ENCODE measurements at regions of chr20 and their contacts with region 1.

Region 1: DNA sequence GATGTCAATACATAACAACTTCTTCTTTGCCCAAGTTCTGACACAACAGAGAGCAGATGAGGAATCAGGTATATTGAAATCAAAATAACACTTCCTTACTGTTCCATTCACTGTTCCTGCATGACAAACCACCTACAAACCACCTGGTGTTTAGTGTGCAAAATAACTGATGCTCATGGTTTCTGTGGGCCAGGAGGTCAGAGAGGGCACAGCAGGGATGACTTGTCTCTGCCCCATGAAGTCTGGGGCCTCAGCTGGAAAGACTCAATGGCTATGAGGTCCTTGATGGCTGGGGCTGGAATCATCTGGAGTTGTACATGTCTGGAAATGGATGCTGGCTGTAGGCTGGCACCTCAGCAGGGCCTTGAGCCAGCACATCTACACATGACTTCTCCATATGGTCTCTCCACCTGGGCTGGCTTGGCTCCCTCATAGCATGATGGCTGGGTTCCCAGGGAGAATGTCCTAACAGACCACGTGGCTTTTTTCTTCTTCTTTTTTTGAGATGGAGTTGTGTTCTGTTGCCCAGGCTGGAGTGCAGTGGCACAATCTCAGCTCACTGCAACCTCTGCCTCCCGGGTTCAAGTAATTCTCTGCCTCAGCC is 7.4 kb upstream of the COX4I2 start:
- DNase-seq: no peak
- ATAC-seq: no peak
- H3K4me3 ChIP-seq: no peak overlapping the region
- H3K27ac ChIP-seq: no peak overlapping the region
- H3K4me1 ChIP-seq: peaks cover 8 to 19% of the 10 kb centered on the region in 2 experiments; a peak in 4 of 5 replicates
- H3K27me3 ChIP-seq: no peaks in the 10 kb centered on the region; a peak in 1 of 5 replicates
- CTCF ChIP-seq: no peak
- EP300 ChIP-seq: no peak
- POLR2A ChIP-seq: no peak
- RAD21 ChIP-seq: no peak

Region 2: GRCh38 chr20:31514159-31515071 is 115.9 kb before region 1 on chr20 and contains the start of gene HM13:
- CTCF ChIA-PET with region 1: no interaction called
- POLR2A ChIA-PET with region 1: no interaction called
- in situ Hi-C with region 1: no loop called
- intact Hi-C with region 1: no loop called
- DNase-seq: peak; percentile 96 to 97 (median 96)
- ATAC-seq: peak; percentile 90
- H3K4me3 ChIP-seq: peak within 1 kb of the TSS; percentile 99
- H3K27ac ChIP-seq: peak within 1 kb of the TSS; percentile 96
- H3K4me1 ChIP-seq: peaks cover 17 to 18% of the 10 kb centered on the region in 2 experiments; a peak in 4 of 5 replicates
- H3K27me3 ChIP-seq: no peaks in the 10 kb centered on the region
- CTCF ChIP-seq: peak; percentile 90 to 96 (median 95)
- EP300 ChIP-seq: no peak
- POLR2A ChIP-seq: peak; percentile 90
- RAD21 ChIP-seq: no peak
- polyA plus RNA-seq, gene HM13: 7.7 to 17.9 TPM

Region 3: GRCh38 chr20:31595654-31596411 is 34.5 kb before region 1 on chr20:
- CTCF ChIA-PET with region 1: no interaction called
- POLR2A ChIA-PET with region 1: no interaction called
- in situ Hi-C with region 1: no loop called
- intact Hi-C with region 1: no loop called
- DNase-seq: peak in 2 of 4 experiments; percentile 26 to 41
- ATAC-seq: peak; percentile 65
- H3K4me3 ChIP-seq: no peak overlapping the region
- H3K27ac ChIP-seq: peak overlapping the region; percentile 47
- H3K4me1 ChIP-seq: peaks cover 24 to 32% of the 10 kb centered on the region in 2 experiments
- H3K27me3 ChIP-seq: no peaks in the 10 kb centered on the region
- CTCF ChIP-seq: no peak
- EP300 ChIP-seq: no peak
- POLR2A ChIP-seq: no peak
- RAD21 ChIP-seq: no peak

Region 4: GRCh38 chr20:31790401-31790800 is 160.1 kb after region 1 on chr20:
- CTCF ChIA-PET with region 1: no interaction called
- POLR2A ChIA-PET with region 1: no interaction called
- in situ Hi-C with region 1: no loop called
- intact Hi-C with region 1: loop called (anchors 10 kb)
- DNase-seq: no peak
- ATAC-seq: no peak
- H3K4me3 ChIP-seq: no peak overlapping the region
- H3K27ac ChIP-seq: no peak overlapping the region
- H3K4me1 ChIP-seq: no peaks in the 10 kb centered on the region
- H3K27me3 ChIP-seq: no peaks in the 10 kb centered on the region
- CTCF ChIP-seq: no peak
- EP300 ChIP-seq: no peak
- POLR2A ChIP-seq: no peak
- RAD21 ChIP-seq: no peak

Measured in K562 (cell line).